Right ventricle myocardium inferior (tissue), 1 donor: ENCODE measurements at regions of chr14 and their contacts with region 1.

Region 1: DNA sequence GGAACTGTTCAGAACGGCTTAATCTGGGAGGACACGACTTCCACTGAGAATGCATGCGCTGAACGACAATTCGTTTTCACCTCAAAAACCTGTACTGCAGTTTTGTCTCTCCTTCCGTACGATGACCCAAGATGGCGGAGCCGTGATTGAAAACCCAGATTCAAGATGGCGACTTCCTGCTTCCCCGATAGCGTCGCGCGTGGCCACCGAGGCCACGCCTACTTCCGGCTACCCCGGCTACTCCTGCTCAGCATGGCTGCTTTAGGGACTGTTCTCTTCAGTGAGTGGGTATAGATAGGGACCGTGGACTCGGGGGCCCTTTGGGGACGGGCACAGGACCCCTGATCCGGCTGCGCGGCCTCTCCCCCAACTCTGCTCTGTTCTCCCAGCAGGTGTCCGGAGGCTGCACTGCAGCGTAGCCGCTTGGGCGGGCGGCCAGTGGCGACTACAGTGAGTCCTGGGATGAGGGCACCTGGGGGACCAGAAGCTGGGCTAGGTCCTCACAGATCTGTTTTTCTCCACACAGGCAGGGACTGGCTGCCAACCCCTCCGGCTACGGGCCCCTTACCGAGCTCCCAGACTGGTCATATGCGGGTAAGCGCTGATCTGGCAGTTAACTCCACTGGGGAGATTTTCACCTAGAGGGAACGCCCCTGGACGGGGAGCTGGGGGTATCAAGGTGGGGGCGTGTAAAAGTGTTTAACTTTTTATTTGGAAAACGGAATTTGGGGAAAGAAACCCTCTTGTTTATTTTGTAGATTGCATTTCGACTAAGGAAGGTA is at the start of gene MRPL52:
- DNase-seq: peak; percentile 94
- ATAC-seq: peak; percentile 95
- total RNA-seq, gene MRPL52: 110 TPM

Region 2: GRCh38 chr14:22739423-22739822 is 90.4 kb before region 1 on chr14:
- intact Hi-C with region 1: no loop called
- DNase-seq: no peak
- ATAC-seq: no peak

Region 3: GRCh38 chr14:22865424-22866405 is 35.9 kb after region 1 on chr14:
- intact Hi-C with region 1: loop called (anchors 5 kb)
- DNase-seq: no peak
- ATAC-seq: no peak

Region 4: DNA sequence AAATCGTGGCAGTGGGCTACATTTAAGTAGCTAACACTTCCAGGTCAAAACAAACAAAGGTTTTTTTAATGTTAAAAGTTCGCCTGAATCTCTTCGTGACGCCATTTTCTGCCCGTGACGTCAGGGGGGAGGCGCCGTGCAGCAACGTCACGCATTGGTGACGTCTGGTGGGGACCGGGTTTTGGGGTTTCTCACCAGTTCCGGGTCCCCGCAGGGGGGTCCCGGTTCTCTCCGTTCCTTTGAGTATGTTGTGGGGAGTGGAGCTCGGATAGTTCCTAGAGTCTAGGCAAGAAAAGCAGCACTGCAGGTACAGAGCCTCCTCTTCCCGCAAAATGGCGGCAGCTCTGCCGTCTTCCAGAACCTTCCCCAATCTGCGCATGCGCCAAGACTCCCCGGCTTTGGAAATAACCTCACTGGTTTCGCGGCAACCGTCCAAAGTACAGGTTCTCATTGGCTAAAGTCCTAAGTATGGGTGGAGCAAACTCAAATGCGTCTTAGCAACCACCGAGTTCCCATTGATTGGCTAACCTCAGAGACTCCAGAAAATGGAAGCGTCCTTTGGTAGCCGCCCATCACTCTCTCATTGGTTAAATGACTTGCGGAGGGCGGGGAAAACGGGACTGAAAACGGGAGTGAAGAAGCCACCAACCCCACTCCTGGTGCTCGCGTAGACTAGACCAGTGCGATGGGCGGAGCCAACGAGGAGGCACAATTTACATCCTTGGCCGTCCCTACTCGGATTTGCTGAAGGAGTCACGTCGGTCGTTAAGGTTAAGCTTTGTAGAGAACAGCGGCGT is 89.2 kb after region 1 on chr14 and contains the start of gene RBM23:
- intact Hi-C with region 1: loop called (anchors 5 kb)
- DNase-seq: peak; percentile 100
- ATAC-seq: peak; percentile 95
- total RNA-seq, gene RBM23: 40.3 TPM